Gastrocnemius medialis (tissue), 4 donors: ENCODE measurements at regions of chr11 and their contacts with region 1.

Region 1: DNA sequence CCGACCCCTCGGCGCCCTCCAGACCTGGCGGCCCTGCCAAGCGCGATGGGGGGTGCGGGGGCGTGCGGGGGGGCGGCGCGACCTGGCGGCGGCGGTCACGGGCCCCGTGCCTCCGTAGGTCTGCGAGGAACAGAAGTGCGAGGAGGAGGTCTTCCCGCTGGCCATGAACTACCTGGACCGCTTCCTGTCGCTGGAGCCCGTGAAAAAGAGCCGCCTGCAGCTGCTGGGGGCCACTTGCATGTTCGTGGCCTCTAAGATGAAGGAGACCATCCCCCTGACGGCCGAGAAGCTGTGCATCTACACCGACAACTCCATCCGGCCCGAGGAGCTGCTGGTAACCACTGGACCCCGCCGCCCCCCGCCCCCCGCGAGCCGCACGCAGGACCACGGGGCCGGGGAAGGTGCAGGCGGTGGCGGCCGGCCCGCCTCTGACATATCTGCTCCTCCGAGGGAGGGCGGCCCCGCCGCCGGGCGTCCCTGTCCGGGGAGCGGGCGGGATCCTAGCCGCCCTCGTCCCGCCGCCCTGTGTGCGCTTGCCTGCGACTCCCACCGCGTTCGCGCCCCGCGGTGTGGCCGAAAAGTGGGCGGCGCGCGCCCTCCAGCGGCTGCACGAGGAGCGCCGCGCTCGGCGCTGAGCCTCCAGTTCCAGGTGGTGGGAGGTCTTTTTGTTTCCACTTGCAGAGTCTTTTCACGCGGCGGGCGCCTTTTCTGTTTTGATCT is 2.1 kb downstream of the CCND1 start:
- DNase-seq: peak; percentile 22 to 47
- ATAC-seq: peak; percentile 71 to 79
- H3K4me3 ChIP-seq: peak overlapping the region; percentile 56 to 76 (median 64)
- H3K27ac ChIP-seq: peak overlapping the region in 2 of 4 donors; percentile 24 to 39
- H3K4me1 ChIP-seq: peaks cover 19 to 40% of the 10 kb centered on the region in 2 donors
- H3K27me3 ChIP-seq: peaks cover 30 to 53% (median 50%) of the 10 kb centered on the region in 3 donors
- CTCF ChIP-seq: peak; percentile 77 to 94 (median 84)
- POLR2A ChIP-seq: no peak

Region 2: GRCh38 chr11:69101115-69101791 is 541.8 kb before region 1 on chr11:
- in situ Hi-C with region 1: loop called in 2 of 4 experiments (anchors 10 to 25 kb)
- intact Hi-C with region 1: loop called (anchors 1 kb)
- DNase-seq: peak in 1 of 2 donors; percentile 36
- ATAC-seq: peak; percentile 41 to 65
- H3K4me3 ChIP-seq: no peak overlapping the region
- H3K27ac ChIP-seq: no peak overlapping the region
- H3K4me1 ChIP-seq: no peaks in the 10 kb centered on the region
- H3K27me3 ChIP-seq: peaks cover 0 to 6% (median 5%) of the 10 kb centered on the region in 3 donors
- CTCF ChIP-seq: peak; percentile 86 to 96 (median 91)
- POLR2A ChIP-seq: no peak

Region 3: DNA sequence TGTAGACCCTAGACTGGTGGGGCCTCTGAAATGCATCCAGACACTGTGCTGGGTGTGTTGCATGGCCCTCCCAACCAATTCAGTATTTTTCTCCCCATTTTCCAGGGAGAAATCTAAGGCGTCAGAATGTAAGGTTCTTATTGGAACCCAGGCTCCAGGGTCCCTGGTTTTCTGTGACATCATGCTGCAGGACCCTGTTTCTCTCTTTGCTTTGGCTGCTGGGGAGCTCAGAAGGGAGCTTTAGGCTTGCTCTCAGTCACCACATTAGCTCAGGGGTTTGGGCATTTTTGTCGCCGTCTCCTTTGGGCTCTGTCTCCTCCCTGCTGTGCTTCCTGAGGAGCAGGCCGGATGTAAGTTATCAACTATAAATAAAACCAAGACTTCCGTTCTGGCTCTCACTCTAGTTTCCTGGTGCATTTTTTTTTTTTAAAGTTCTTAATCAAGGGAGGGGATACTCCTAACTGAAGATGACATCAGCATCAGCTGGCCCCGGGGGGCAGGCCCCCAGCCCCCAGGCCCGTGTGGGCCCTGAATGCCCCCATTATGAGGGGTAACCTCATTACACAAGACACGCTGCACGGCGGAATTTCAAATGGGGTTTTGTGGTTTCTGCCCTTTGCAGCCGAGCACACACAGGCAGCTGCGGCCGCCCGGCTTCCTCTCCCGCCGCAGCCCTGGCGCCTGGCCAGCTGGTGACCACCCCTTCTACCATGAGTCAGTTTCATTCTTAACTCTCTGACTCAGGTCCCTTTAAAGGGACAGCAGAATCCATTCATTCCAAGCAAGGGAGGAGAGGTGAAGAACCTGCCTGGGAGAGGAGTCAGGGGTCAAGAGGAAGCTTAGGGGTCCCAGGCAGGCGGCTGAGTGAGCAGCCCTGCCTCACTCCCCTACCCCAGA is 345.9 kb before region 1 on chr11:
- in situ Hi-C with region 1: loop called in 1 of 4 experiments (anchors 25 kb)
- intact Hi-C with region 1: loop called (anchors 5 kb)
- DNase-seq: peak; percentile 61 to 78
- ATAC-seq: peak; percentile 77 to 79
- H3K4me3 ChIP-seq: peak overlapping the region; percentile 1 to 30 (median 14)
- H3K27ac ChIP-seq: peak overlapping the region; percentile 54 to 63 (median 59)
- H3K4me1 ChIP-seq: peaks cover 19% of the 10 kb centered on the region in 2 donors
- H3K27me3 ChIP-seq: no peaks in the 10 kb centered on the region
- CTCF ChIP-seq: no peak
- POLR2A ChIP-seq: no peak

Region 4: GRCh38 chr11:69443138-69443967 is 199.7 kb before region 1 on chr11:
- in situ Hi-C with region 1: no loop called
- intact Hi-C with region 1: loop called (anchors 2 kb)
- DNase-seq: peak; percentile 62 to 65
- ATAC-seq: peak; percentile 67 to 68
- H3K4me3 ChIP-seq: peak overlapping the region; percentile 34 to 54 (median 45)
- H3K27ac ChIP-seq: peak overlapping the region; percentile 49 to 73 (median 63)
- H3K4me1 ChIP-seq: peaks cover 21 to 24% of the 10 kb centered on the region in 2 donors
- H3K27me3 ChIP-seq: no peaks in the 10 kb centered on the region
- CTCF ChIP-seq: no peak
- POLR2A ChIP-seq: no peak